ENCODE measurements at regions of chr1 and their contacts with region 1.

Region 1: DNA sequence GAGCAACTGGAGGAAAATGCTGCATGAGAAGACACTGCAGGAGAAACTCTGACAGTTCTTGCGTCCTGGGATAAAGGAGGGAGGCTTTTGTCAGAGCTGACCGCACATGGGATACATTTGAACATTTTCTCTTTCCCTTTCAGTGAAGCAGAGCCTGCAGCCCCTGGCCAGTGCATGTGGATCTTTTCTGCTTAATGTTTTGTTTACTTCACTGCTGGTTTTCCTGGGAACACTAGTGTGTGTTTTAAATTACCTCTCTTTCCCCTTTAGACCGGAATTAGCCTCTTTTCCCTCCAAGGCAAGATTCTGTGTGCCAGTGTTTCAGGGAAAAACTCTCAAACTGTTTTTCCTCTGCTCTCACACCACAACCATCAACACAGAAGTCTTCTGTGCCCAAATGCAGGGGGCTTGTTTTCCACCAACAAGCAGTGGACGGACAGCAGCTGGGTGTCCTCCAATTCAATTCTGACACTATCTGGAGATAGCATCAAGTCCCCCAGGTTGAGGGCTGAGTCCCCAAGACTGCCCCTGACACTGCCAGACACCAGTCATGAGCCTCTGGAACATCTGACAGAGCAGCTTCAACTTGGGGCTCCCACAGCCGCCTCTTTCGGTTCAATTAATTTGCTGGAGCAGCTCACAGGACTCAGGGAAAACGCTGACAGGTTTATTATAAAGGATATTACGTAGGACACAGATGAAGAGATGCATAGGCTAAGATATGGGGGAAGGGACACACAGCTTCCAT is 136.2 kb downstream of the RHOU start:
- DNase-seq: no peak
- ATAC-seq: peak; percentile 31

Region 2: GRCh38 chr1:228120857-228121489 is 750.5 kb before region 1 on chr1:
- intact Hi-C with region 1: loop called (anchors 10 kb)
- DNase-seq: no peak
- ATAC-seq: no peak

Region 3: GRCh38 chr1:228765168-228765946 is 106.1 kb before region 1 on chr1:
- intact Hi-C with region 1: no loop called
- DNase-seq: no peak
- ATAC-seq: no peak